H1 (cell line): ENCODE measurements at regions of chr11 and their contacts with region 1.

Region 1: GRCh38 chr11:65506770-65507505 is 8.1 kb downstream of the MALAT1 start:
- DNase-seq: peak in 1 of 2 experiments; percentile 63
- H3K4me3 ChIP-seq: no peak overlapping the region
- H3K27ac ChIP-seq: no peak overlapping the region
- H3K4me1 ChIP-seq: peaks cover 0 to 7% (median 3%) of the 10 kb centered on the region in 4 experiments; a peak in 4 of 7 replicates
- H3K27me3 ChIP-seq: no peaks in the 10 kb centered on the region
- CTCF ChIP-seq: no peak
- EP300 ChIP-seq: no peak
- POLR2A ChIP-seq: peak; percentile 71 to 98
- RAD21 ChIP-seq: no peak

Region 2: DNA sequence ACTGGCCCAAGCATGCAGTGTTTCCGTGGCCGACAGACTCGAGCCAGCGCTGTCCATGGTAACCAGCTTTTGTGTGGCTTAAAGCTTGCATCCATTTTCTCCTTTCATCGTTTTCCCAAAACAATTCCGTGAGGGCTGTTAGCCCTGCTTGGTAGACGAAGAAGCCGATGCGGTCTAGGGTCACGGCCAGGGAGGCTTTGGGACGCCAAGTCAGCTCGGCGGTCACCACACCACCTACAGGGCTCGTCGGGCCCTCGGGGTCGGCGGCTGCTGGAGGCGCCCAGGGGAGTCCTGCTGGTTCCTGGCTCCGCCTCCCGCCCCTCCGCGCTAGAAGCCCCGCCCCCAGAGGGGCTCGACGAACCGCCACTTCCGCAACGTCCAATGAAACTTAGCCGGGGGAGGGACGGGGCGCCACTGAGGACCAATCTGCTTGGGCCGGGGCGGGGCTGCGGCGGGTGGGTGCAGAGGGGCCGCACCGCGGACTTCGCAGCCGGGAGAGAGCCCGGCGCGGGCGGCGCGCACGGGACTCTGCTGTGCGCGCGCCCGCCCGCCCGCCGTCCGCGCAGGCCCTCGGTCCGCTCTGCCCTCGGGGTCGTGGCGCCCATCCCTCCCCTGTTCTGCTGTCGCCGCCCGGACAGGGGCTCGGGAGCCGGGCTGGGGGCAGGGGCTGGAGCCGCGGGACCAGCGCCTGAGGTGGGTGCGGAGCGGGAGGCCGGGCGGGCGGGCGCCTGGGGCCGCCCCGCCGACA is 152.5 kb before region 1 on chr11 and contains the start of gene TIGD3:
- CTCF ChIA-PET with region 1: interaction called, 14 read pairs
- POLR2A ChIA-PET with region 1: interaction called, 26 read pairs
- DNase-seq: peak; percentile 85 to 98
- H3K4me3 ChIP-seq: peak within 1 kb of the TSS; percentile 65 to 90 (median 78)
- H3K27ac ChIP-seq: no peak within 1 kb of the TSS
- H3K4me1 ChIP-seq: peaks cover 0 to 10% (median 3%) of the 10 kb centered on the region in 4 experiments; a peak in 5 of 7 replicates
- H3K27me3 ChIP-seq: peaks cover 7 to 29% (median 19%) of the 10 kb centered on the region in 4 experiments
- CTCF ChIP-seq: no peak
- EP300 ChIP-seq: no peak
- POLR2A ChIP-seq: peak in 1 of 2 experiments; percentile 11; a peak in 1 of 3 replicates
- RAD21 ChIP-seq: no peak
- total RNA-seq, gene TIGD3: 0.88 and 1.3 TPM in 2 replicates

Region 3: GRCh38 chr11:65366340-65366773 is 140.6 kb before region 1 on chr11:
- CTCF ChIA-PET with region 1: interaction called, 22 read pairs
- POLR2A ChIA-PET with region 1: interaction called, 19 read pairs
- DNase-seq: no peak
- H3K4me3 ChIP-seq: no peak overlapping the region
- H3K27ac ChIP-seq: no peak overlapping the region
- H3K4me1 ChIP-seq: peaks cover 0 to 4% (median 0%) of the 10 kb centered on the region in 4 experiments; a peak in 2 of 7 replicates
- H3K27me3 ChIP-seq: no peaks in the 10 kb centered on the region
- CTCF ChIP-seq: peak in 2 of 3 experiments; percentile 71 to 77; a peak in 3 of 4 replicates
- EP300 ChIP-seq: no peak
- POLR2A ChIP-seq: no peak
- RAD21 ChIP-seq: peak; percentile 87 to 92

Region 4: DNA sequence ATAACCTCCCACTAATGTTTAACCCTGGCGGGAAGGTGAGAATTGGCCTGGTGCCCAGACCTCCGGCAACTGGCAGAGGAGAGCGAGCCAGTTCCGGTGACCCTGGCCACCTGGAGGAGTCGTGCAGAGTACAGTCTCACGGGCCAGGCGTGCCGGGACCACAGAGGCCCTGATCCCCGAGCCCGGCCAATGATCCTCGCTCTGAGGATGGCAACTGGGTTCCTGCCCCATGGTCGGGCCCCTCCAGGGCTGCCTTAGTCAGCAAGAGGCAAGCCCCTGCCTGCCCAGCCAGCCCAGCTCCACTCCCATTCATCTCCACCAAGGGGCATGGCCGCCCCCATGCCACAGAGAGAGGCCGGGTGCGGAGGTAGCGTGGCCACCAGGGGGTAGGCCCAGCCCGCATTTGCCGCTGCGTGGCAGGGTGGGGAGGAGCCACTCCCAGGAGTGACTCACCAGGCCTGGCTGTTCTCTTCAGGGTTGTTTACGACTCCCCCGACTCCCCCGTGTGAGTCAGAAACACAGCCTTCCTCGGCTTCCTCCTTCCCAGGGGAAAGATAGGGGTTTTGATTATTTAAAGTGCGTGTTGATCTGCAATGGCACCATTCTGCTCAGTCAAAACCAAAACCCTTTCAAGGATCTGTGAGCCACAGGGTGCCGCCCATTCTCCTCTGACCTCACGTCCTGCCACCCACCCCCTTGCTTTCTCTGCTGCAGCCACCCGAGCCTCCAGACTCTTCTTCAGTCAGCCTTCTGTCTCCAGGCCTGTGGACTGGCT is 124.7 kb before region 1 on chr11 and contains the start of gene SLC25A45:
- CTCF ChIA-PET with region 1: interaction called, 29 read pairs
- POLR2A ChIA-PET with region 1: interaction called, 202 read pairs
- DNase-seq: peak in 1 of 2 experiments; percentile 80
- H3K4me3 ChIP-seq: peak within 1 kb of the TSS in 1 of 4 experiments; percentile 8; a peak in 2 of 8 replicates
- H3K27ac ChIP-seq: no peak within 1 kb of the TSS; the same call in 1 of the 2 replicates
- H3K4me1 ChIP-seq: peaks cover 0 to 12% (median 11%) of the 10 kb centered on the region in 4 experiments; a peak in 5 of 7 replicates
- H3K27me3 ChIP-seq: 0 out of 7 replicates have a peak, but pooled peaks cover 0 to 2% (median 0%) of the 10 kb centered on the region in 4 experiments
- CTCF ChIP-seq: peak; percentile 23 to 50 (median 46)
- EP300 ChIP-seq: no peak
- POLR2A ChIP-seq: 0 out of 3 replicates have a peak, but pooled peaks of 1 of the 2 experiments have one; percentile 19
- RAD21 ChIP-seq: peak; percentile 49 to 55
- total RNA-seq, gene SLC25A45: 0.54 and 0.61 TPM in 2 replicates

Region 5: DNA sequence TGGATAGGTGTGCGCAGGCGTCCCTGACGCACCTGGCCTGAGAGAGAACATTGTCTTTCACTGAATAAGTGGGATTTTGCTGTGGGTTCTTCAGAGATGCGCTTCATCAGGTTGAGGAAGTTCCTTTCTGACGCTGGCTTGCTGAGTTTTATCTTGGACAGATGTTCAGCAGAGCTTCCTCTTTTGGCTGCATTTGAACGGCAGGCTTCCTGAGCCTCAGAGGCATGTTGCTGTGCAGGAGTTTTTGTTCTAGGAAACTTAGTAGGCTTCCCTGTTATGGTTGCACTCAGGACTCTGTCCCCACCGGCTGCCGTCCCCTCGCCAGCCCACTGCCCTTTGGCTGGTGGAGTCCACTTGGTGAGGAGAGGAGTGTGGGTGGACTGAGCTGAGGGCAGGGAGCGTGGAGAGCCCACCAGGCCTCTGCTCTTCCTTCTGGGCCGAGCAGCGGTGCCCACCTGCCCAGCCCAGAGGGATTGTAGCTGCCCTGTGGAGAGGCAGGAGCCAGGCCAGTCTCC is 103.3 kb before region 1 on chr11:
- CTCF ChIA-PET with region 1: interaction called, 4 read pairs
- POLR2A ChIA-PET with region 1: interaction called, 202 read pairs
- DNase-seq: no peak
- H3K4me3 ChIP-seq: no peak overlapping the region
- H3K27ac ChIP-seq: no peak overlapping the region
- H3K4me1 ChIP-seq: no peaks in the 10 kb centered on the region; a peak in 1 of 7 replicates
- H3K27me3 ChIP-seq: no peaks in the 10 kb centered on the region
- CTCF ChIP-seq: no peak
- EP300 ChIP-seq: no peak
- POLR2A ChIP-seq: no peak
- RAD21 ChIP-seq: no peak

Region 6: GRCh38 chr11:65440831-65441499 is 66.0 kb before region 1 on chr11:
- CTCF ChIA-PET with region 1: interaction called, 5 read pairs
- POLR2A ChIA-PET with region 1: interaction called, 18 read pairs
- DNase-seq: no peak
- H3K4me3 ChIP-seq: no peak overlapping the region
- H3K27ac ChIP-seq: no peak overlapping the region
- H3K4me1 ChIP-seq: no peaks in the 10 kb centered on the region; a peak in 2 of 7 replicates
- H3K27me3 ChIP-seq: no peaks in the 10 kb centered on the region
- CTCF ChIP-seq: no peak
- EP300 ChIP-seq: no peak
- POLR2A ChIP-seq: no peak
- RAD21 ChIP-seq: no peak

Region 7: GRCh38 chr11:65448418-65449105 is 58.4 kb before region 1 on chr11:
- CTCF ChIA-PET with region 1: interaction called, 3 read pairs
- POLR2A ChIA-PET with region 1: interaction called, 18 read pairs
- DNase-seq: no peak
- H3K4me3 ChIP-seq: no peak overlapping the region
- H3K27ac ChIP-seq: no peak overlapping the region
- H3K4me1 ChIP-seq: no peaks in the 10 kb centered on the region; a peak in 4 of 7 replicates
- H3K27me3 ChIP-seq: no peaks in the 10 kb centered on the region; a peak in 2 of 7 replicates
- CTCF ChIP-seq: no peak
- EP300 ChIP-seq: no peak
- POLR2A ChIP-seq: no peak
- RAD21 ChIP-seq: no peak